BJ (cell line): ENCODE measurements at regions of chr2 and their contacts with region 1.

Region 1: DNA sequence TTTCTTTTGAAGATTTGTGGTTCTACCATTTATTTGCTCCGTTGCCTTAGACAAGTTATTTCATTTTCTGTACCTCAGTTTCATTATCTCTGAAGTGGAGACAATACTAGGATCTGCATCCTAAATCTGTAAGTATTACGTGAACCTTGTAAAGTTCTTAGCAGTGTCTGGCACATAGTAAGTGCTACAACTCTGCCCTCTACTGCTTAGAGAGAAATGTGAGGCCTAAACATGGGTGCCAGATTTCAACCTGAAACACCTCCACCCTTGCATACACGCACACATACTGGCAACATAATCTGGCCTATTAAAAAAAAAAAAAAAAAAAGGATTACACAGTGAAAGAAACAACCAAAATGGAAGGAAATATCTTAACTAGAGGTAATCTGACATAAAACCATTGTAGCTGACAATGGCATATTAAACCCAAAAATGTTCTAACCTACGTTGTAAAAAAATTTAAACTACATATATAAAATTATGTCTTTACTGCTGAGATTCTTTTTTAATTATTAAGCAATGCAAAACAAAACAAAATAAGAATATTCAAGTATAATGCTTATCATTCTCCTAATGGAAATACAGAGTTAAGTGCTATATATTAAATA is 132.6 kb downstream of the MAP2 start:
- DNase-seq: no peak
- H3K4me3 ChIP-seq: no peak overlapping the region
- H3K27me3 ChIP-seq: no peaks in the 10 kb centered on the region
- CTCF ChIP-seq: peak; percentile 67

Region 2: DNA sequence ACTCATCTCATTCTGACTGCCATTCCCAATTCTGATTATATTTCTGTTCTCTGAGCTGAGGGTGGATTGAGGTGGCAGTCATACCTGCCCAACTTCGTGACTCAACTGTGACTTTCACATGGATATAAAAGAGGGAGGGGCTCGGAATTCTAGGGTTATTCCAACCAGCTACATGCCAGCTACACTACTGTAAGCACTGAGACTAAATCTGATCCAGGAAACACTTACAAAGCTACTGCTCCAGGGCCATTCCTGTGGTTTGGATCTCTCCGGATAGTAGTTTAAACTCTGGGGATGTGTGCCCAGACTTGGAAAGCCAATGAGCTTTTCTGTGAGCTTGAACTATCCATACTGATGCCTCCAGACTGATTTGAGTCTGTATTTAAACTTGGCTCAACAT is 124.8 kb before region 1 on chr2:
- CTCF ChIA-PET with region 1: interaction called, 12 read pairs
- POLR2A ChIA-PET with region 1: no interaction called
- DNase-seq: peak; percentile 61
- H3K4me3 ChIP-seq: no peak overlapping the region
- H3K27me3 ChIP-seq: no peaks in the 10 kb centered on the region
- CTCF ChIP-seq: no peak